Breast epithelium (tissue), 4 donors: ENCODE measurements at regions of chr2 and their contacts with region 1.

Region 1: GRCh38 chr2:16005816-16006536 is 65.6 kb downstream of the MYCN start:
- DNase-seq: peak in 1 of 2 donors; percentile 26
- H3K4me3 ChIP-seq: no peak overlapping the region
- H3K27ac ChIP-seq: no peak overlapping the region
- H3K4me1 ChIP-seq: no peaks in the 10 kb centered on the region
- H3K27me3 ChIP-seq: no peaks in the 10 kb centered on the region
- CTCF ChIP-seq: no peak
- POLR2A ChIP-seq: no peak

Region 2: DNA sequence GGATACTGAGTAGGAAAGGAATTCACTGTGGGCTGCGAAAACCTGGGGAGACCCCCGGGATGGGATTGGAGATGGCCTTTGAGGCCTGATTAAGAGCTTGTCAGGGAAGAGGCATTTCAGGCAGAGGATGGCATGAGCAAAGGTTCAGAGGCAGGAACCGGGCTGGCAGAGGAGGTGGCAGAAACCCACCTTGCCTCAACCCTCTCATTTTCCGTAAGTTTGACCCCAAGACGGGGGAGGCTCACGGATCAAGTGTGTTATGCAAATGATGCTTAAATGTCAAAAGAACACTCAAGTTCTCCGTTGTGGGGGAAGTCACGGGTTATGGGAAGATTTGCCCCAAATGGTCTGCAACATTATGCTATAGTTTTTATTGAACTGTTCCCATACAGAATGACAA is 22.7 kb after region 1 on chr2:
- intact Hi-C with region 1: loop called (anchors 1 kb)
- DNase-seq: no peak
- H3K4me3 ChIP-seq: no peak overlapping the region
- H3K27ac ChIP-seq: no peak overlapping the region
- H3K4me1 ChIP-seq: no peaks in the 10 kb centered on the region
- H3K27me3 ChIP-seq: no peaks in the 10 kb centered on the region
- CTCF ChIP-seq: no peak
- POLR2A ChIP-seq: no peak

Region 3: GRCh38 chr2:16496426-16497388 is 490.7 kb after region 1 on chr2:
- intact Hi-C with region 1: no loop called
- DNase-seq: no peak
- H3K4me3 ChIP-seq: no peak overlapping the region
- H3K27ac ChIP-seq: no peak overlapping the region
- H3K4me1 ChIP-seq: no peaks in the 10 kb centered on the region
- H3K27me3 ChIP-seq: no peaks in the 10 kb centered on the region
- CTCF ChIP-seq: no peak
- POLR2A ChIP-seq: no peak